ENCODE measurements at regions of chr20 and their contacts with region 1.

Region 1: GRCh38 chr20:600141-600540 is 10.0 kb downstream of the TCF15 start:
- DNase-seq: no peak
- ATAC-seq: no peak
- H3K4me3 ChIP-seq: no peak overlapping the region
- H3K4me3 Mint-ChIP-seq: no peak overlapping the region
- H3K27ac ChIP-seq: no peak overlapping the region
- H3K27ac Mint-ChIP-seq: no peak overlapping the region
- H3K4me1 ChIP-seq: no peaks in the 10 kb centered on the region
- H3K4me1 Mint-ChIP-seq: no peaks in the 10 kb centered on the region
- H3K27me3 ChIP-seq: no peaks in the 10 kb centered on the region
- H3K27me3 Mint-ChIP-seq: peaks cover 3% of the 10 kb centered on the region
- CTCF ChIP-seq: no peak

Region 2: GRCh38 chr20:371755-372542 is 228.2 kb before region 1 on chr20:
- CTCF ChIA-PET with region 1: no interaction called
- POLR2A ChIA-PET with region 1: no interaction called
- intact Hi-C with region 1: no loop called
- DNase-seq: peak in 1 of 9 experiments; percentile 23
- ATAC-seq: no peak
- H3K4me3 ChIP-seq: no peak overlapping the region
- H3K4me3 Mint-ChIP-seq: no peak overlapping the region
- H3K27ac ChIP-seq: no peak overlapping the region
- H3K27ac Mint-ChIP-seq: no peak overlapping the region
- H3K4me1 ChIP-seq: no peaks in the 10 kb centered on the region
- H3K4me1 Mint-ChIP-seq: peaks cover 2% of the 10 kb centered on the region
- H3K27me3 ChIP-seq: no peaks in the 10 kb centered on the region
- H3K27me3 Mint-ChIP-seq: no peaks in the 10 kb centered on the region
- CTCF ChIP-seq: no peak

Region 3: GRCh38 chr20:528923-529604 is 71.1 kb before region 1 on chr20:
- CTCF ChIA-PET with region 1: no interaction called
- POLR2A ChIA-PET with region 1: no interaction called
- intact Hi-C with region 1: loop called in 1 of 2 experiments (anchors 2 kb)
- DNase-seq: no peak
- ATAC-seq: no peak
- H3K4me3 ChIP-seq: no peak overlapping the region
- H3K4me3 Mint-ChIP-seq: no peak overlapping the region
- H3K27ac ChIP-seq: no peak overlapping the region
- H3K27ac Mint-ChIP-seq: no peak overlapping the region
- H3K4me1 ChIP-seq: peaks cover 12% of the 10 kb centered on the region
- H3K4me1 Mint-ChIP-seq: peaks cover 33% of the 10 kb centered on the region
- H3K27me3 ChIP-seq: no peaks in the 10 kb centered on the region
- H3K27me3 Mint-ChIP-seq: no peaks in the 10 kb centered on the region
- CTCF ChIP-seq: no peak

Region 4: GRCh38 chr20:645318-646106 is 45.4 kb after region 1 on chr20:
- CTCF ChIA-PET with region 1: no interaction called
- POLR2A ChIA-PET with region 1: no interaction called
- intact Hi-C with region 1: no loop called
- DNase-seq: peak; percentile 31 to 74 (median 63)
- ATAC-seq: peak; percentile 89
- H3K4me3 ChIP-seq: no peak overlapping the region
- H3K4me3 Mint-ChIP-seq: no peak overlapping the region
- H3K27ac ChIP-seq: no peak overlapping the region
- H3K27ac Mint-ChIP-seq: no peak overlapping the region
- H3K4me1 ChIP-seq: peaks cover 6% of the 10 kb centered on the region
- H3K4me1 Mint-ChIP-seq: peaks cover 14% of the 10 kb centered on the region
- H3K27me3 ChIP-seq: no peaks in the 10 kb centered on the region
- H3K27me3 Mint-ChIP-seq: peaks cover 23% of the 10 kb centered on the region
- CTCF ChIP-seq: peak; percentile 95

Region 5: GRCh38 chr20:833450-834150 is 233.5 kb after region 1 on chr20 and contains the start of gene FAM110A:
- CTCF ChIA-PET with region 1: no interaction called
- POLR2A ChIA-PET with region 1: no interaction called
- intact Hi-C with region 1: no loop called
- DNase-seq: peak; percentile 89 to 99 (median 96)
- ATAC-seq: peak; percentile 96
- H3K4me3 ChIP-seq: peak within 1 kb of the TSS; percentile 90 to 96
- H3K4me3 Mint-ChIP-seq: peak within 1 kb of the TSS; percentile 91
- H3K27ac ChIP-seq: peak within 1 kb of the TSS; percentile 85 to 96
- H3K27ac Mint-ChIP-seq: peak within 1 kb of the TSS; percentile 82
- H3K4me1 ChIP-seq: peaks cover 27% of the 10 kb centered on the region
- H3K4me1 Mint-ChIP-seq: peaks cover 43% of the 10 kb centered on the region
- H3K27me3 ChIP-seq: no peaks in the 10 kb centered on the region
- H3K27me3 Mint-ChIP-seq: no peaks in the 10 kb centered on the region
- CTCF ChIP-seq: no peak
- total RNA-seq, gene FAM110A: 6.7 to 7.7 TPM